Cardiac septum (tissue), 1 donor: ENCODE measurements at regions of chr6 and their contacts with region 1.

Region 1: DNA sequence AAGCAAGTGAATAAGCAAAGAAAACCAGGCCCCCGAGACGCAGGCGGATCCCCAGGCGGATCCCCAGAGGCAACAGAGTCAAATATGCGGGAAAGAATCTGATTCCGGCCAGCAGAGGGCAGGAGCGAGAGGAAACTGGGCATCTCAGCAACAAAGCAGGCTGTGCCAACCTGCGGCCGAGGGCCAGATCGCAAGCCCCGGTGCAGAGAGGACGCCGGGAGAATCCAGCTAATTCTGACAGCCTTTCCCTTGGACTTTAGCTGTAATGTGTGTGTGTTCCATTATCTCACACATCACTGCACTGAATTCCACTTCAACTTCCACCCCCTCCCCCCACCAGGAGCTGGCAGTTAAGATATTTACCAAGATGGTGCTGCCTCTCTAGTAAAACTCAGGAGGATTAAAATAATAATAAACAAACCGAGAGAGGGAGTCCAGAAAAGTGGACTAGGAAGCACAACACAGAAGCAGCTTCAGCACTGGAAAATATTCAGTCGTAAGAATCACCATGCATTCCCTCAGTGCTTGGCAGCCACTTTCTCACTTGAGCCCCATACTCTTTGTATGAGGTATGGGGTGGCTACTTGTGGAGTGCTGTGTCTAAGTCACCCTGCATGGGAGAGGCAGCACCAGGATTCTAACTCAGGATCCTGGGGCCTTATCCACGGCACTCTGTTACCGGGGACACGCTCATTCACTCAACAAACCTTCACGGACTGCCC is 66.2 kb upstream of the SNX9 start:
- DNase-seq: peak; percentile 88

Region 2: GRCh38 chr6:157873735-157874344 is 117.0 kb after region 1 on chr6:
- intact Hi-C with region 1: loop called (anchors 5 kb)
- DNase-seq: no peak

Region 3: GRCh38 chr6:158060455-158061360 is 303.8 kb after region 1 on chr6:
- intact Hi-C with region 1: loop called (anchors 10 kb)
- DNase-seq: peak; percentile 86

Region 4: DNA sequence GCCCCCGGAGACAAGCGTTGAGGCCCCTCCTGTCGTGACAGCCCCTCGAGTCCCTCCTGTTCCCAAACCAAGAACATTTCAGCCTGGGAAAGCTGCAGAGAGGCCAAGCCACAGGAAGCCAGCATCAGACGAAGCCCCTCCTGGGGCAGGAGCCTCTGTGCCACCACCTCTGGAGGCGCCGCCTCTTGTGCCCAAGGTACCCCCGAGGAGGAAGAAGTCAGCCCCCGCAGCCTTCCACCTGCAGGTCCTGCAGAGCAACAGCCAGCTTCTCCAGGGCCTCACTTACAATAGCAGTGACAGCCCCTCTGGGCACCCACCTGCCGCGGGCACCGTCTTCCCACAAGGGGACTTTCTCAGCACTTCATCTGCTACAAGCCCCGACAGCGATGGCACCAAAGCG is 338.8 kb after region 1 on chr6:
- intact Hi-C with region 1: no loop called
- DNase-seq: no peak